ENCODE measurements at regions of chr4 and their contacts with region 1.

Region 1: GRCh38 chr4:100790836-100791615 is 273.2 kb upstream of the EMCN start:
- DNase-seq: no peak
- H3K4me3 ChIP-seq: no peak overlapping the region
- H3K27ac ChIP-seq: no peak overlapping the region
- H3K4me1 ChIP-seq: no peaks in the 10 kb centered on the region
- CTCF ChIP-seq: no peak

Region 2: DNA sequence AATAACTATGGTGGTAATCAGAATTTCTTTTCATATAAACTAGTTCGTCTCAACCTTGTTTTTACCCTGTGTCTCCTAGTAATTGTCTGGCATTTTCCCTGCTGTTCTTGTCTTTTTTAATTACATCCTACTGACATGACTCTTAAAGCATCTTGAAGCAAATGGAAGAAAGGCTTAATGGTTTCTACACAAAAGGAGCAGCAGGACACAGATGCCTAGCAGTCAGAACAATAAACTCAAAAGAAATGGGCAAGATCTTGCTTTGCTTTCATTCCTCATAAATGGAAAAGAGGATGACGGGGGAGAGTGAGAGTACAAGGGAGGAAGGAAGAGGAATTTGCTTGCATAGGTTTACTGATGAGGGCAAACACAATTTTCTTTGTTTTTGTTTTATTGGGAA is 20.0 kb after region 1 on chr4:
- CTCF ChIA-PET with region 1: no interaction called
- POLR2A ChIA-PET with region 1: no interaction called
- intact Hi-C with region 1: no loop called
- DNase-seq: no peak
- H3K4me3 ChIP-seq: no peak overlapping the region
- H3K27ac ChIP-seq: no peak overlapping the region
- H3K4me1 ChIP-seq: no peaks in the 10 kb centered on the region
- CTCF ChIP-seq: no peak

Region 3: DNA sequence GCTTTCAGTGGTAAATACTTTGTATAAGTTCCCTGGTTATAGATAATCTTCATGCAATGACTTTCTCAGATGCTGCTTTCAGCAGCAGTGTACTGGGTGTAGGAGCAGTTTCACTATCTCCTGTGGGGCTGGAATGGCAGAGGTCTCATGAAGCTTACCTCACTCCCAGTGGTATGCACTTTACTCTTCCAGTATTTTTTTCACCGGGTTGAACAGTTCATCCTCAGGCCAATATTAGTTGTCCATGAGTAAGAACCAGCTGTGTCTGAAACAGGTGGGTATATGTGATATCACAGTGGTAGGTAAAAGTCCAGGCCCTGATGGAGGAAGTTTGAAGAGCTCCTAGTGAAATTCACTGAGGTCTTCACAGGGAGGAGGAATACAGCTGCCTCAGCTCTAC is 78.2 kb after region 1 on chr4:
- CTCF ChIA-PET with region 1: no interaction called
- POLR2A ChIA-PET with region 1: interaction called, 10 read pairs
- intact Hi-C with region 1: no loop called
- DNase-seq: no peak
- H3K4me3 ChIP-seq: no peak overlapping the region
- H3K27ac ChIP-seq: no peak overlapping the region
- H3K4me1 ChIP-seq: no peaks in the 10 kb centered on the region
- CTCF ChIP-seq: no peak